Endothelial cell of umbilical vein (primary cell): ENCODE measurements at regions of chr10 and their contacts with region 1.

Region 1: DNA sequence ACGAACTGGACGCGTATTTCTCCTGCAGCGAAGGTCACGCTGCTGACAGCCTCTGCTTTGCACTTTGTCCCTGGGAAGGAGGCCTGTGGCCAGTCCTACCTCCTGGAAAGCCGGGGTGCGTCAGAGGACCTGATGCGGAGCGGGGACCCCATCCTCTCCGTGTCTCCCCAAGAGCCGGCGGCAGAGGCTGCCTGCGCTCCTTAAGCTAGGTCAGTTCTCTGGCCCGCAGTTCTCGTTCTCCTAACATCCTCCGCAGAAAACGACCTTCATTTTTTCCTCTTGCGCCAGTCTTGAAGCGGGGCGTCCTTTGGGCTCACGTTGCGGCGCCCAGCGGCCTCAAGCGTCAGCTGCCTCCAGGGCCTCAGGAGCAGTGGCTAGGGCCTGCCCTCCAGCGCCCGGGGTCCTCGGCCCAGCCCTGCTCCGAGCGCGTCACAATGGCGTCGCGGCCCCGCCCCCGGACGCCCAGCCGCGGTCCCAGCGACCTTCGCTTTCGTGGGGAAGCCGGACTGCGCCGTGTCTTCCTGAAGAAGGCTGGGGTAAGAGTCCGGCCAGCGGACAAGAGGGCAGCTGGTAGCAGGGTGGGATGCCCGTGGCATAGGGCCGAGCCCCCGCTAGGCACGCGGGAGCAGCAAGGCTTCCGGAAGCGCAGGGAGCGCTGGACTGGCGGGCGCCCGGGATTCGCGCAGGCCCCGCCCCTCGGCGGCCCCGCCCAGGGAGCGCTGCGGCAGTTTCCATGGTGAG is at the start of gene ZNF487:
- DNase-seq: peak; percentile 90
- H3K4me3 ChIP-seq: peak within 1 kb of the TSS; percentile 22 to 84 (median 66)
- H3K27ac ChIP-seq: peak within 1 kb of the TSS; percentile 92
- H3K4me1 ChIP-seq: peaks cover 3% of the 10 kb centered on the region
- H3K27me3 ChIP-seq: no peaks in the 10 kb centered on the region
- CTCF ChIP-seq: peak in 1 of 2 donors; percentile 30
- POLR2A ChIP-seq: peak; percentile 27
- total RNA-seq, gene ZNF487: 2.6 and 3.0 TPM in 2 replicates

Region 2: DNA sequence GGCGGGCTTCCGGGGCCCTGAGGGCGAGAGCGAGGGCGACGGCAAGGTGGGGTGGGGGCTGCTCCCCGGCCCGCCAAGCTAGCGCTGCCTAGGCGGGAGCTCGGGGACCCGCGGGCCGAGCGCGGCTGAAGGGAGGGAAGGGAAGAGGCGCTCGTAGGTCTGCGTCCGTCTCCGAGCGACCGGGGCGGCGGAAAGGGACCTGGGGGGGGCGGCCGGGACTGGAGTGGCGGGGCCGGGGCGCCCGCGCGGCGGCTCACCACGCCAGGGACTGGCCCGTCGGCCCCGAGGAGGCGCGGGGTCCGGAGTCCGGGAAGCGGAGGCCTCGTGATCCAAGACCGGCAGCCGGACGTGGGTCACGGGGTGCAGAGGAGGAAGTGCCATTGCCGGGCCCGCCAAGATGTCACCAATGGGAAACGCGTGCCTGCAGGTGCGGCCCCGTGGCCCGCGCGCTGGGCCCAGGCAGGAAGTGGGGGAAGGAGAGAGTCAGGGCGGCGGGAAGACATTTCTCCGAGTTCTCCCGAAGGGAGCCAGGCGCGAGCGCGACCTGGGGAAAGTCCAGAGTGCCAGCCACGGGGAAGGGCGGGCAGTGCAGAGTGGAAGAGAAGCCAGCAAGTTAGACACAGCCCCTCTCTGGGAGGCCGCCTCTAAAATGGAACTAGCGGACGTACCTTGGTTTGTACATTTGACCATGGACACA is 39.5 kb before region 1 on chr10:
- CTCF ChIA-PET with region 1: no interaction called
- POLR2A ChIA-PET with region 1: no interaction called
- dilution Hi-C with region 1: no loop called
- intact Hi-C with region 1: loop called (anchors 1 kb)
- DNase-seq: peak; percentile 84
- H3K4me3 ChIP-seq: peak overlapping the region; percentile 13 to 79 (median 56)
- H3K27ac ChIP-seq: peak overlapping the region; percentile 77
- H3K4me1 ChIP-seq: peaks cover 43% of the 10 kb centered on the region
- H3K27me3 ChIP-seq: no peaks in the 10 kb centered on the region
- CTCF ChIP-seq: no peak
- POLR2A ChIP-seq: peak; percentile 13

Region 3: DNA sequence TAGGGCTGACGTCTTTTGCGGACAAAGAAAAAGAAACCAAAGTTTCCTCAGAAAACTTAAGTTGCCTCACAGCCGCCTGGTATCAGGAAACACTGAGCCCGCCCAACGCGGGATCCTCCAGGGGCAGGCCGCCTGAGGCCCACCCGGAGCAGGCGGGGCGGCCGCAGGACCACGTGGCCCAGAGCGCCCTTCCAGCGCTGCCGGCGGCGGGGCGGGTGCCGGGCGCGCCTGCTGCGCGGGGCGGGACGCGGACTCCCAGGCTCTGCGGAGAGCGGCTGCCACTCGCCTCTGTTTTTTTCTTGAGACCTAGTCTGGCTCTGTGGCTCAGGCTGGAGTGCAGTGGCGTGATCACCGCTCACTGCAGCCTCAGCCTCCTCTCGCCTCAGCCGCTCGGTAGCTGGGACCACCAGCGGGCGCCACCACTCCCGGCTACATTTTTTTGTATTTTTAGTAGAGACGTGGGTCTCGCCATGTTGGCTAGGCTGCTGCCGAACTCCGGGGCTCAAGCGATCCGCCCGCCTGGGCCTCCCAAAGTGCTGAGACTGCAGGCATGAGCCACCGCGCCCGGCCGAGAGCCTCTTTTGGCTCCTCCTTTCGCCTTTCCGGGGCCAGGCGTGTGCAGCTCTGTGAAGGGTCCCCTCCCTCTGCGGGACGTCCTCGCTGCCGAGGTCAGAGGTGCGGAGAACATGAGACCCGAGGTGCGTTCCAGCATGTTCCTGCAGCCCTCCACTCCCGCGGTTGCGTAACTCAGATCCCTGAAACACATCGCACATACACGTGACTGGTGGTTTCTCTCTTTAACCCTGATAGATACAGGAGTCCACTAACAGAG is 16.0 kb before region 1 on chr10:
- CTCF ChIA-PET with region 1: interaction called, 3 read pairs
- POLR2A ChIA-PET with region 1: interaction called, 4 read pairs
- dilution Hi-C with region 1: no loop called
- intact Hi-C with region 1: loop called (anchors 1 kb)
- DNase-seq: peak; percentile 84
- H3K4me3 ChIP-seq: peak overlapping the region; percentile 11 to 51 (median 37)
- H3K27ac ChIP-seq: peak overlapping the region; percentile 68
- H3K4me1 ChIP-seq: peaks cover 16% of the 10 kb centered on the region
- H3K27me3 ChIP-seq: no peaks in the 10 kb centered on the region
- CTCF ChIP-seq: peak in 1 of 2 donors; percentile 23
- POLR2A ChIP-seq: peak; percentile 68

Region 4: GRCh38 chr10:44526765-44527164 is 1090.2 kb after region 1 on chr10:
- CTCF ChIA-PET with region 1: no interaction called
- POLR2A ChIA-PET with region 1: no interaction called
- dilution Hi-C with region 1: no loop called
- intact Hi-C with region 1: no loop called
- DNase-seq: no peak
- H3K4me3 ChIP-seq: no peak overlapping the region
- H3K27ac ChIP-seq: no peak overlapping the region
- H3K4me1 ChIP-seq: no peaks in the 10 kb centered on the region
- H3K27me3 ChIP-seq: no peaks in the 10 kb centered on the region
- CTCF ChIP-seq: no peak
- POLR2A ChIP-seq: no peak